ENCODE measurements at regions of chr14 and their contacts with region 1.

Region 1: GRCh38 chr14:75278422-75279161 is at the start of gene FOS:
- DNase-seq: peak; percentile 81 to 98 (median 91)
- ATAC-seq: peak; percentile 67
- H3K4me3 ChIP-seq: peak within 1 kb of the TSS; percentile 77 to 89
- H3K4me3 Mint-ChIP-seq: peak within 1 kb of the TSS; percentile 97
- H3K27ac ChIP-seq: peak within 1 kb of the TSS; percentile 81 to 90
- H3K27ac Mint-ChIP-seq: peak within 1 kb of the TSS; percentile 98
- H3K4me1 ChIP-seq: peaks cover 55% of the 10 kb centered on the region
- H3K4me1 Mint-ChIP-seq: peaks cover 47% of the 10 kb centered on the region
- H3K27me3 ChIP-seq: peaks cover 10 to 38% of the 10 kb centered on the region in 2 experiments
- H3K27me3 Mint-ChIP-seq: peaks cover 17% of the 10 kb centered on the region
- CTCF ChIP-seq: no peak
- total RNA-seq, gene FOS: 1,826 to 1,941 TPM

Region 2: GRCh38 chr14:74867673-74868072 is 410.9 kb before region 1 on chr14:
- CTCF ChIA-PET with region 1: no interaction called
- POLR2A ChIA-PET with region 1: no interaction called
- intact Hi-C with region 1: no loop called
- DNase-seq: peak in 8 of 9 experiments; percentile 43 to 72 (median 57)
- ATAC-seq: peak; percentile 81
- H3K4me3 ChIP-seq: no peak overlapping the region
- H3K4me3 Mint-ChIP-seq: peak overlapping the region; percentile 48
- H3K27ac ChIP-seq: peak overlapping the region in 1 of 2 experiments; percentile 60
- H3K27ac Mint-ChIP-seq: peak overlapping the region; percentile 82
- H3K4me1 ChIP-seq: peaks cover 25% of the 10 kb centered on the region
- H3K4me1 Mint-ChIP-seq: peaks cover 26% of the 10 kb centered on the region
- H3K27me3 ChIP-seq: no peaks in the 10 kb centered on the region
- H3K27me3 Mint-ChIP-seq: no peaks in the 10 kb centered on the region
- CTCF ChIP-seq: no peak

Region 3: DNA sequence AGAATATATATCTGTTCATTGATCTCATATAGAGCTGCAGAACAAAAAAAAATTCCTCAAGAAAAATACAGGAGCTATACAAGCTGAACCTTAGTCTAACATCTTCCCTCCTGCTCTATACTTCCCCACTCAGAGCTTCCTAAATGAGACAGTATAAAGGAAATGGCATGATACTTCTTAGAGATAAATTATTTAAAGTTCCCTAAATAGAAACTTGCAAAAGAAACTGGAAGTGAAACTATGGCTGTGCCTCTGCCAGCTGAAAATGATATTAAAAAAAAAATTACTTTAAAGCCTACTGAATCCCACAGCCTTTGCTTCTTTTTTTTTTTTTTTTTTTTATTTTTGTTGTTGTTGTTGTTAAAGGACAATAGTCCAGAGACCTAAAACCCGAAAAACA is 140.1 kb before region 1 on chr14:
- CTCF ChIA-PET with region 1: no interaction called
- POLR2A ChIA-PET with region 1: no interaction called
- intact Hi-C with region 1: no loop called
- DNase-seq: peak in 1 of 9 experiments; percentile 33
- ATAC-seq: peak; percentile 26
- H3K4me3 ChIP-seq: no peak overlapping the region
- H3K4me3 Mint-ChIP-seq: no peak overlapping the region
- H3K27ac ChIP-seq: no peak overlapping the region
- H3K27ac Mint-ChIP-seq: peak overlapping the region; percentile 71
- H3K4me1 ChIP-seq: peaks cover 26% of the 10 kb centered on the region
- H3K4me1 Mint-ChIP-seq: peaks cover 47% of the 10 kb centered on the region
- H3K27me3 ChIP-seq: no peaks in the 10 kb centered on the region
- H3K27me3 Mint-ChIP-seq: no peaks in the 10 kb centered on the region
- CTCF ChIP-seq: no peak

Region 4: DNA sequence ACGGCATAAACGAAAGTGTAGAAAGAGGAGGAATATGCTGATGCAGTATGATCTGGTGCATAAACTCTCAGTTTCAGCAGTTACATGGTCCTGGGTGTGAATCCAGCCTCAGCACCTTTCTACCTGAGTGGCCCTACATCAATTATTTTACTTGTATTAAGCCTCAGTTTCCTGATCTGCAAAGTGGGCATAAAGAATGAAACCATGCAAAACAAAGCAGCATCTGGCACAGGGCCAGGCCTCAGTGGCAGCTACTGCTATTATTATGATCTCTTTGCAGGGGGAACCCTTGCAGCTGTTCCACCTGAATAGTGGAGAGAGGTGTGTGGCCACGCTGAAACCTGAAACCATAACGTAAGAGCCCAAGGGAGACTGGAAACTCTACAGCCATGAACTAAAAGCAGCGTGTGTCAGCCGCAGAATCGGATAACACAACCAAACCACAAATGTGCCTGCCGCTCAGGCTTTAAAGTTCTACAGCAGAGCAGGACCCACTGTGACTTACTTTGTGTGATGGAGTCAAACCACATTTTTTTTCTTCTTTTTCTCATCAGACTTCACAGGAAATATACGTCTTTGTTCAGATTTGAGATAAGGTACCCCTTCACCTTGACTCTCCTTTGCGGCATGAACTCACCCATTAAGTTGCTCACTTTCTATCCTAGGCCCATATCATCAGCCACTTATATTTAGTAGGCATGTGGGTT is 29.2 kb before region 1 on chr14:
- CTCF ChIA-PET with region 1: interaction called, 4 read pairs
- POLR2A ChIA-PET with region 1: interaction called, 5 read pairs
- intact Hi-C with region 1: loop called (anchors 1 kb)
- DNase-seq: peak; percentile 68 to 97 (median 81)
- ATAC-seq: peak; percentile 74
- H3K4me3 ChIP-seq: peak overlapping the region; percentile 9 to 24
- H3K4me3 Mint-ChIP-seq: peak overlapping the region; percentile 13
- H3K27ac ChIP-seq: peak overlapping the region; percentile 84 to 90
- H3K27ac Mint-ChIP-seq: peak overlapping the region; percentile 88
- H3K4me1 ChIP-seq: peaks cover 62% of the 10 kb centered on the region
- H3K4me1 Mint-ChIP-seq: peaks cover 58% of the 10 kb centered on the region
- H3K27me3 ChIP-seq: no peaks in the 10 kb centered on the region
- H3K27me3 Mint-ChIP-seq: no peaks in the 10 kb centered on the region
- CTCF ChIP-seq: no peak

Region 5: GRCh38 chr14:75258615-75259466 is 19.8 kb before region 1 on chr14:
- CTCF ChIA-PET with region 1: no interaction called
- POLR2A ChIA-PET with region 1: no interaction called
- intact Hi-C with region 1: loop called (anchors 1 kb)
- DNase-seq: peak; percentile 97 to 100 (median 100)
- ATAC-seq: peak; percentile 89
- H3K4me3 ChIP-seq: peak overlapping the region; percentile 45 to 54
- H3K4me3 Mint-ChIP-seq: peak overlapping the region; percentile 82
- H3K27ac ChIP-seq: peak overlapping the region; percentile 92 to 98
- H3K27ac Mint-ChIP-seq: peak overlapping the region; percentile 97
- H3K4me1 ChIP-seq: peaks cover 17% of the 10 kb centered on the region
- H3K4me1 Mint-ChIP-seq: peaks cover 29% of the 10 kb centered on the region
- H3K27me3 ChIP-seq: no peaks in the 10 kb centered on the region
- H3K27me3 Mint-ChIP-seq: no peaks in the 10 kb centered on the region
- CTCF ChIP-seq: no peak

Region 6: GRCh38 chr14:75399821-75400678 is 121.5 kb after region 1 on chr14:
- CTCF ChIA-PET with region 1: no interaction called
- POLR2A ChIA-PET with region 1: no interaction called
- intact Hi-C with region 1: no loop called
- DNase-seq: no peak
- ATAC-seq: no peak
- H3K4me3 ChIP-seq: no peak overlapping the region
- H3K4me3 Mint-ChIP-seq: no peak overlapping the region
- H3K27ac ChIP-seq: no peak overlapping the region
- H3K27ac Mint-ChIP-seq: no peak overlapping the region
- H3K4me1 ChIP-seq: no peaks in the 10 kb centered on the region
- H3K4me1 Mint-ChIP-seq: no peaks in the 10 kb centered on the region
- H3K27me3 ChIP-seq: no peaks in the 10 kb centered on the region
- H3K27me3 Mint-ChIP-seq: peaks cover 2% of the 10 kb centered on the region
- CTCF ChIP-seq: no peak